ENCODE measurements at regions of chr11 and their contacts with region 1.

Region 1: GRCh38 chr11:68003846-68004550 is at the start of gene UNC93B1:
- DNase-seq: peak; percentile 63 to 94
- H3K4me3 ChIP-seq: peak within 1 kb of the TSS; percentile 83 to 88
- H3K27ac ChIP-seq: peak within 1 kb of the TSS; percentile 50 to 63
- H3K4me1 ChIP-seq: peaks cover 0 to 2% of the 10 kb centered on the region in 2 donors
- H3K27me3 ChIP-seq: no peaks in the 10 kb centered on the region
- CTCF ChIP-seq: no peak
- total RNA-seq, gene UNC93B1: 74.7 TPM

Region 2: DNA sequence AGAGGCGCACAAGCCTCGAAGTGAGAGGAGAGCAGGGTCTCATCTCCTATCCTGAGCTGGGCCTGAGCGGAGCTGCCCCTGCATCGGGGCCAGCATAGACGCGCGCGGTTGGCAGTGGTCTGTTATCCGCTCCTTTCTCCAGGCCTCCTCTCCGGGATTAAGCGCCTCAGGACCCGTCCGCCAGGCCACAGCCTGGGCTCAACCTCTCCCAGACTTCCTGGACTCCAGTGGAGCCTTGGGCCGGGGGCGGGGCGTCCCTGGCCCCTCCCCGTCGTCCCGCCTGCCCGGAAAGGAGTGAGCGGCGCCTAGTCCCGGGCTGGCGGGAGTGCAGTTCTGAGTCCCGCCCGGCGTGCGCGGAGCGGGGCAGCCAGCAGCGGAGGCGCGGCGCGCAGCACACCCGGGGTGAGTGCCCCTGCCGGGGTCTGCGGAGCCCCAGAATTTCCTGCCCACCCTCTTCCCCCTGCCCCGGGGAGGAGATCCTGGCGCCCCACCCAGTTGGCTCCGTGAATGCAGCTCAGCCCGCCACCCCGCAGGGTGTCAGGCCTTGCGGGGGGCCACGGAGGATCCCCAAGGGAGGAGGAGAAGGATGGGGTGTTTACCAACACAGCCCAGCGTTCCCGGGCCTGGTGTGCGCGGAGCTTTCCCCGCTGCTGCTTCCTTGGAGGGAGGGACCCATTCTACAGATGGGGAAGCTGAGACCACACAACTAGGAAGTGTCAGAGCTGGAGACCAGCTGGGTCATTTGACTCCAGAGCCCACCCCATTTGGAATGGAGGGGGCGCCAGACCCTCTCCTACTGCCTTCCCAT is 34.9 kb after region 1 on chr11 and contains the start of gene TCIRG1:
- intact Hi-C with region 1: loop called (anchors 2 kb)
- DNase-seq: peak; percentile 73 to 96
- H3K4me3 ChIP-seq: peak within 1 kb of the TSS; percentile 63 to 78
- H3K27ac ChIP-seq: peak within 1 kb of the TSS; percentile 90 to 91
- H3K4me1 ChIP-seq: peaks cover 14 to 30% of the 10 kb centered on the region in 2 donors
- H3K27me3 ChIP-seq: no peaks in the 10 kb centered on the region
- CTCF ChIP-seq: peak in 2 of 3 experiments; percentile 8 to 79
- total RNA-seq, gene TCIRG1: 385 TPM

Region 3: DNA sequence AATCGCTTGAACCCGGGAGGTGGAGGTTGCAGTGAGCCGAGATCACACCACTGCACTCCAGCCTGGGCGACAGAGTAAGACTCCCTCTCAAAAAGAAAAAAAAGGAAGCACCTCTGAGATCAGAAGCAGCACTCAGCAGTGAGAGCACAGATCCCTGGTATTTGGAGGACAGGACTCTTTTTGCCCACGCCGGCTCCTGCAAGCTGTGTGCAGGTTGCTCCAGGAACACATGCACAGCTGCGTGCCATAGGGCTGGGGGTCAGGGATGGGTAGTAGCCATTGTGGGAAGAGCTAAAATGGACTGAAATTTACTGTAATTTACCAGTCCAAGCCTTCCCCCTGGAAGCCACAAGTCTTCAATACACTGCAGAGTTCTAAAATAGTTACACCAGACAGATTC is 231.7 kb after region 1 on chr11:
- intact Hi-C with region 1: no loop called
- DNase-seq: no peak
- H3K4me3 ChIP-seq: no peak overlapping the region
- H3K27ac ChIP-seq: no peak overlapping the region
- H3K4me1 ChIP-seq: no peaks in the 10 kb centered on the region
- H3K27me3 ChIP-seq: no peaks in the 10 kb centered on the region
- CTCF ChIP-seq: no peak

Region 4: GRCh38 chr11:68251765-68252164 is 247.8 kb after region 1 on chr11:
- intact Hi-C with region 1: no loop called
- DNase-seq: no peak
- H3K4me3 ChIP-seq: no peak overlapping the region
- H3K27ac ChIP-seq: no peak overlapping the region
- H3K4me1 ChIP-seq: no peaks in the 10 kb centered on the region
- H3K27me3 ChIP-seq: no peaks in the 10 kb centered on the region
- CTCF ChIP-seq: no peak